Activated CD4-positive, alpha-beta T cell treated with anti-CD3 and anti-CD28 coated beads, Interleukin-2, amount 10 ng/mL, durations not matched to agents 24 days and 14 days (primary cell): ENCODE measurements at regions of chr6 and their contacts with region 1.

Region 1: GRCh38 chr6:151323791-151324487 is 67.4 kb downstream of the ZBTB2 start:
- DNase-seq: peak; percentile 92
- H3K4me3 Mint-ChIP-seq: peak overlapping the region; percentile 33
- H3K27ac Mint-ChIP-seq: no peak overlapping the region
- H3K4me1 Mint-ChIP-seq: peaks cover 17% of the 10 kb centered on the region
- H3K27me3 Mint-ChIP-seq: peaks cover 47% of the 10 kb centered on the region

Region 2: DNA sequence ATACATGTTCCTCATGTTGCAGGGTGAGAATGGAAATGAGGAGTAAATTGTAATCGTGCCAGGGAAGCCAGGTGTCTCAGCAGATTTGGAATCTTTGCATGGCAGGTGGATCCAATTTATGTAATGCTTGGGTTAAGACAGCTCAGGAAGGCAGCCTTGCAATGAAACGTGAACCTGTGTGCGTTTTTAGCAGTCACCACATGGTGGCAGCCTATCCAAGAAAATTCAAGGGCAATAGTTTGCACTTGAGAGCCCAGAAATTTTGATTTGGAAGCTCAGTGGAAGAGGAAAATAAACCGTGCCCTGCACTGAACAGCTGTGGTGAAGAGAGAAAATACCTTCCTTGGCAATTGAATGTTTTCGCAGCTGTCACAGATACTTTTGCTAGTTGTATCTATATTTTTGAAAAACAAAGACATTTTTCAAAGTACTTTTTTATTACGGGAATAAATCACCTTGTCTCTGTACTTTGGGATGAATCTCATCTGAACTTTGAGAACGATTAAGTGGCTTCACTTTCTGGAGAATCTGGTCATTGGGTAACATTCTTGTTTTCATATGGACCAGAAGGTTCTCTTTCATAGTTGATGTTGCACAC is 432.0 kb before region 1 on chr6:
- intact Hi-C with region 1: loop called (anchors 1 kb)
- DNase-seq: peak; percentile 90
- H3K4me3 Mint-ChIP-seq: no peak overlapping the region
- H3K27ac Mint-ChIP-seq: no peak overlapping the region
- H3K4me1 Mint-ChIP-seq: peaks cover 30% of the 10 kb centered on the region
- H3K27me3 Mint-ChIP-seq: no peaks in the 10 kb centered on the region

Region 3: DNA sequence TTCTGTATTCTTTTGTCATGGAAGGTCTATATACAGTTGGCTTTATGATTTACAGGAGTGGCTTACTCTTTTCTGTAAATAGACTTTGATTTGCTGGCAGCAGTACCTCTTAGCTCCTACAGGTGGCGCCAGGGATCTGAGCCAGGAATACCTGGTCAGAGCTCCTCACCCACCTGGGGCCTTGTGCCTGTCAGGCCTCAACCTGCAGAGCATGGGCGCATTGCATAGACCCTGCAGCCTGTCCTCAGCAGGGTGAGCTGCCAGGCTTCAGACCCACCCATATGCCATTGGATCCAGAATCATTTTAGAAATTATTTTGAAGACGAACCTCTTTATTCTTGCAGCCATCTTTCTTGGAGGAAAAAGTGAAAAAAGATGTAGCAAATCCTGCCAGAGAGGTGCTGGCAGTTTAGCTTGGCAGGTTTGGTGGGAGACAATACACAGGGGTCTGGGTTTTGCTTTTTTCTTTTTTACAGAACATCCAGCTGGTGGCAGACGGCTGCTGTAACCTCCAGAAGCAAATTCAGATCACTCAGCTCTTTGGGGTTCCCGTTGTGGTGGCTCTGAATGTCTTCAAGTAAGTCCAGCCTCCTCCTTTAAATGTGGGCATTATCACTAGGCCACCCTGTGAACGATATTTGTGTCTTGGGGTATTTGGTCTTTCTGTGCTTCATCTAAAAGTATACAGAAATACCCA is 309.4 kb before region 1 on chr6:
- intact Hi-C with region 1: loop called (anchors 1 kb)
- DNase-seq: peak; percentile 87
- H3K4me3 Mint-ChIP-seq: no peak overlapping the region
- H3K27ac Mint-ChIP-seq: no peak overlapping the region
- H3K4me1 Mint-ChIP-seq: peaks cover 1% of the 10 kb centered on the region
- H3K27me3 Mint-ChIP-seq: no peaks in the 10 kb centered on the region

Region 4: DNA sequence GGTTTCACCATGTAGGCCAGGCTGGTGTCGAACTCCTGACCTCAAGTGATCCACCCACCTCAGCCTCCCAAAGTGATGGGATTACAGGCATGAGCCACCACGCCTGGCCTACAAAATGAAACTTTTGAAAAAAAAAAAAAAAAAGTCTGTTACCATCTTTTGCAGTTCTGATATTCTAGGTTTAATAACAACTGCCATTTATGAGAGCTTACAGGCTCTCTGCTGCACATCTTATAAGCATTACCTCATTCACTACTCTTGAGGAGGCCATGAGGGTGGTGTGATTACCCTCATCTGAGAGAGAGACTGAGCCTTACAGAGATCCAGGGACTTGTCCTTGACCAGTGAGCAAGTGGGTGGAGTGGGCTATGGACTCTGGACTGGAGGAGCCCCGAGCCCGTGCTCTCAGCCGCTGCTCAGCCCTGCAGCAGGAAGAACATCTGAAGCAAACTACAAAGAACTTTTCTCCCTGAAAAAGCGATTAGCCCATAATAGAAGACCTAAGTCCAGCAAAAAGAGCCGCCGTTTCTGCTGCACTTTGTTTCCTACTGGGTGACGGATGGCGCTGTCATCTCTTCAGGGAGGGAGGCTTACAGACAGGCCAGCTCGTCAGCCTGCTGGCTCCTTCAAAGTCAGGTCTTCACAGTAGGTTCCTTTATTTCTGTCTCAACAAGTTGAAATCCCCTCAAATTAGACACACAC is 204.0 kb before region 1 on chr6:
- intact Hi-C with region 1: no loop called
- DNase-seq: no peak
- H3K4me3 Mint-ChIP-seq: no peak overlapping the region
- H3K27ac Mint-ChIP-seq: no peak overlapping the region
- H3K4me1 Mint-ChIP-seq: peaks cover 6% of the 10 kb centered on the region
- H3K27me3 Mint-ChIP-seq: peaks cover 4% of the 10 kb centered on the region

Region 5: DNA sequence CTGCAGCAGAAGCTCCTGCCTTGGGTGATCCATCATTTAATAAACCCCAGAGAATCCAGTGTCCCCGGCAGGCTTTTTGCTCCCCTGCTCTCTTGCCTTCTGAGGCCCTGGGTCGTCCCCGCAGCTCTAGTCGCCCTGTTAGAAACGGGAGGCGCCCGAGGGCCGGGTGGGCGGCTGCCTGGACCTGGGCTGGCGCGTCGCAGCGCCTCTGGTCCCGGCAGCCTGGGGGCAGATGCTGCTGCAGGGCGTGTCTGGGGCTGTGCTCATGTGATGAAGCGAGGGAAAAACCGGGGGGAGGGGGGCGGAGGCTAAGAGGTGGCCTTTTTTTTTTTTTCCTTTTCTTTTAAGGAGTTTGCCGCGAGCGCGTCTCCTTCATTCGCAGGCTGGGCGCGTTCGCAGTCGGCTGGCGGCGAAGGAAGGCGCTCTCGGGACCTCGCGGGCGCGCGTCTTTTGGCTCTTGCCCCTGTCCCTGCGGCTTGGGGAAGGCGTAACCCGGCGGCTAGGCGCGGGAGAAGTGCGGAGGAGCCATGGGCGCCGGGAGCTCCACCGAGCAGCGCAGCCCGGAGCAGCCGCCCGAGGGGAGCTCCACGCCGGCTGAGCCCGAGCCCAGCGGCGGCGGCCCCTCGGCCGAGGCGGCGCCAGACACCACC is 83.8 kb before region 1 on chr6:
- intact Hi-C with region 1: loop called (anchors 2 kb)
- DNase-seq: peak; percentile 70
- H3K4me3 Mint-ChIP-seq: peak overlapping the region; percentile 85
- H3K27ac Mint-ChIP-seq: no peak overlapping the region
- H3K4me1 Mint-ChIP-seq: peaks cover 6% of the 10 kb centered on the region
- H3K27me3 Mint-ChIP-seq: peaks cover 71% of the 10 kb centered on the region

Region 6: GRCh38 chr6:151290877-151291721 is 32.8 kb before region 1 on chr6:
- intact Hi-C with region 1: no loop called
- DNase-seq: no peak
- H3K4me3 Mint-ChIP-seq: no peak overlapping the region
- H3K27ac Mint-ChIP-seq: no peak overlapping the region
- H3K4me1 Mint-ChIP-seq: peaks cover 19% of the 10 kb centered on the region
- H3K27me3 Mint-ChIP-seq: peaks cover 57% of the 10 kb centered on the region

Region 7: GRCh38 chr6:151512481-151512880 is 188.5 kb after region 1 on chr6:
- intact Hi-C with region 1: no loop called
- DNase-seq: no peak
- H3K4me3 Mint-ChIP-seq: no peak overlapping the region
- H3K27ac Mint-ChIP-seq: no peak overlapping the region
- H3K4me1 Mint-ChIP-seq: no peaks in the 10 kb centered on the region
- H3K27me3 Mint-ChIP-seq: peaks cover 3% of the 10 kb centered on the region